Dendritic cell treated with granulocyte-macrophage colony-stimulating factor and Interleukin-4, amounts not matched to agents 40 ng/mL and 50 ng/mL, for 4 days (primary cell): ENCODE measurements at regions of chr6 and their contacts with region 1.

Region 1: GRCh38 chr6:2841264-2842138 is at the start of gene SERPINB1:
- H3K4me3 Mint-ChIP-seq: peak within 1 kb of the TSS; percentile 95
- H3K27ac Mint-ChIP-seq: peak within 1 kb of the TSS; percentile 94
- H3K4me1 Mint-ChIP-seq: peaks cover 74% of the 10 kb centered on the region
- H3K27me3 Mint-ChIP-seq: no peaks in the 10 kb centered on the region

Region 2: GRCh38 chr6:2770171-2770570 is 71.3 kb before region 1 on chr6:
- intact Hi-C with region 1: loop called (anchors 10 kb)
- H3K4me3 Mint-ChIP-seq: peak overlapping the region; percentile 37
- H3K27ac Mint-ChIP-seq: no peak overlapping the region
- H3K4me1 Mint-ChIP-seq: peaks cover 44% of the 10 kb centered on the region
- H3K27me3 Mint-ChIP-seq: no peaks in the 10 kb centered on the region

Region 3: GRCh38 chr6:2791124-2791974 is 50.2 kb before region 1 on chr6:
- intact Hi-C with region 1: loop called (anchors 2 kb)
- H3K4me3 Mint-ChIP-seq: no peak overlapping the region
- H3K27ac Mint-ChIP-seq: peak overlapping the region; percentile 44
- H3K4me1 Mint-ChIP-seq: peaks cover 53% of the 10 kb centered on the region
- H3K27me3 Mint-ChIP-seq: no peaks in the 10 kb centered on the region

Region 4: GRCh38 chr6:2853761-2854395 is 12.4 kb after region 1 on chr6:
- intact Hi-C with region 1: loop called (anchors 1 kb)
- H3K4me3 Mint-ChIP-seq: peak overlapping the region; percentile 58
- H3K27ac Mint-ChIP-seq: peak overlapping the region; percentile 93
- H3K4me1 Mint-ChIP-seq: peaks cover 73% of the 10 kb centered on the region
- H3K27me3 Mint-ChIP-seq: no peaks in the 10 kb centered on the region